Activated CD4-positive, alpha-beta T cell treated with anti-CD3 and anti-CD28 coated beads for 36 hours (primary cell): ENCODE measurements at regions of chr21 and their contacts with region 1.

Region 1: GRCh38 chr21:39137248-39138178 is 45.7 kb downstream of the PSMG1 start:
- DNase-seq: peak; percentile 26
- ATAC-seq: peak; percentile 42
- H3K4me3 Mint-ChIP-seq: no peak overlapping the region
- H3K27ac Mint-ChIP-seq: no peak overlapping the region
- H3K4me1 Mint-ChIP-seq: no peaks in the 10 kb centered on the region
- H3K27me3 Mint-ChIP-seq: no peaks in the 10 kb centered on the region

Region 2: GRCh38 chr21:38669176-38669575 is 468.3 kb before region 1 on chr21:
- CTCF ChIA-PET with region 1: interaction called, 8 read pairs
- POLR2A ChIA-PET with region 1: no interaction called
- intact Hi-C with region 1: loop called in 1 of 2 experiments (anchors 5 kb)
- DNase-seq: peak; percentile 25
- ATAC-seq: no peak
- H3K4me3 Mint-ChIP-seq: no peak overlapping the region
- H3K27ac Mint-ChIP-seq: no peak overlapping the region
- H3K4me1 Mint-ChIP-seq: no peaks in the 10 kb centered on the region
- H3K27me3 Mint-ChIP-seq: peaks cover 15% of the 10 kb centered on the region

Region 3: GRCh38 chr21:39183237-39184007 is 45.9 kb after region 1 on chr21 and contains the start of gene PSMG1:
- CTCF ChIA-PET with region 1: no interaction called
- POLR2A ChIA-PET with region 1: no interaction called
- intact Hi-C with region 1: no loop called
- DNase-seq: peak; percentile 97
- ATAC-seq: peak; percentile 92
- H3K4me3 Mint-ChIP-seq: peak within 1 kb of the TSS; percentile 95
- H3K27ac Mint-ChIP-seq: peak within 1 kb of the TSS; percentile 97
- H3K4me1 Mint-ChIP-seq: peaks cover 63% of the 10 kb centered on the region
- H3K27me3 Mint-ChIP-seq: no peaks in the 10 kb centered on the region
- total RNA-seq, gene PSMG1: 109 to 123 TPM